ENCODE measurements at regions of chr2 and their contacts with region 1.

Region 1: DNA sequence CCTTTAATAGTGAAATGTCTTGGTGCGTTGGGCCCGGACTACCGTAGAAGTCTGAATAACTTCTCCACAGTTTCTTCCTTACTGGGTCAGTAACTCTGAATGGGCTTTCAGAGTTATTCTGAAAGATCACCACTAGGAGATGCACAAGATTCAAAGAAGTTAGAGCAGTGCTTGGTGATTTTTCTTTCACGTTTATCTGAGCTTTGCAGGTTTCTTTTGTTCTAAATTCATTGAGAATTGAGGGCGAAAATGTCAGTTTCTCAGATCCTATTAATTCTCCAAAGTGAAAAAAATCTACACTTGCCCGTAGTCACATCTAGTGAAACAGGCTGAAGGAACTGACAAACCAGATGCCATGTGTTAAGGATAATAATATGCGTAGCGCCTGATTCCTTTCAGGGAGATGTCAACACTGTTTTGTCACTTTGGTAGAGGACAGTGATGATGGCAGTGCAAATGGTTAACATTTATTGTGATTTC is 70.1 kb downstream of the QPCT start:
- DNase-seq: peak in 2 of 9 experiments; percentile 60 to 69
- ATAC-seq: peak; percentile 57
- H3K4me3 ChIP-seq: no peak overlapping the region
- H3K4me3 Mint-ChIP-seq: no peak overlapping the region
- H3K27ac ChIP-seq: no peak overlapping the region
- H3K27ac Mint-ChIP-seq: no peak overlapping the region
- H3K4me1 ChIP-seq: no peaks in the 10 kb centered on the region
- H3K4me1 Mint-ChIP-seq: peaks cover 15% of the 10 kb centered on the region
- H3K27me3 ChIP-seq: no peaks in the 10 kb centered on the region
- H3K27me3 Mint-ChIP-seq: peaks cover 3% of the 10 kb centered on the region
- CTCF ChIP-seq: peak; percentile 94

Region 2: DNA sequence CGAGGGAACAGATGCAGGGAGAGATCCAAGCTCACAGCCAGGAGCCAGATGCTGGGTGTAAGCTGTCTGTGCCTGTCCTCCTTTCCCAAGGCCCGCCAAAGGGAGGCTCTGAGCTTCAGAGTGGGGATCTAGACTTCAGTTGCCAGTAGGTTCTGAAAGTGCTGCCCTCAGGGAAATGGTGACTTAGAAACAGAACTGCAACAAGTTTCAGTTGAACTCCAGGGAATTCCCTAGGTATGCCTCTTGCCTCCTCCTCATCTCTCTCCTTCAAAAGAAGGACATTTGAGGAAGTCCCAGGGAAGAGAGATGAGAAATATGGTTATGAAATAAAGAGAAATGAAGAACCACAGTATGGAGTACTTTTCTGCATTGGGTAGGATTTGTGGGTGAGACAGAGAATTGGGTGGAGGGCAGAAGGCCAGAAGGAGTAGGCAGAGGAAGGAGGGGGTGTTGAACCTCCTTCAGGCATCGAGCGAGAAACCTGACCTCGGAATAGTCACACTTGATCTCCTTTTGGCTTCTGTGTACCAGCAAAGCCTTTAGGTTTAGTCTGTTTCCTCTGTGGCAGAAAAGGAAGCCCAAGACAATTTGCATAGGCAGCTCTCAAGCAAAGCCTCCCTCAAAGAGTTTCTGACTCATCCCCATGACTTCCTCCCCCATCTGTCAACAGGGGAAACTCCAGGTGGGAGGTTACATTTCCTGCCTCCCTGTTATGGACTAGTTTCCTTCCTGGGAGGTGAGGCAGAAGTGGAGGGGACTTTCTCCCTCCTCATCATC is 24.3 kb before region 1 on chr2:
- CTCF ChIA-PET with region 1: interaction called, 79 read pairs
- POLR2A ChIA-PET with region 1: interaction called, 3 read pairs
- intact Hi-C with region 1: no loop called
- DNase-seq: peak in 8 of 9 experiments; percentile 28 to 89 (median 64)
- ATAC-seq: peak; percentile 93
- H3K4me3 ChIP-seq: no peak overlapping the region
- H3K4me3 Mint-ChIP-seq: peak overlapping the region; percentile 0
- H3K27ac ChIP-seq: peak overlapping the region in 1 of 2 experiments; percentile 67
- H3K27ac Mint-ChIP-seq: peak overlapping the region; percentile 80
- H3K4me1 ChIP-seq: peaks cover 23% of the 10 kb centered on the region
- H3K4me1 Mint-ChIP-seq: peaks cover 3% of the 10 kb centered on the region
- H3K27me3 ChIP-seq: no peaks in the 10 kb centered on the region
- H3K27me3 Mint-ChIP-seq: no peaks in the 10 kb centered on the region
- CTCF ChIP-seq: no peak

Region 3: GRCh38 chr2:37537316-37537715 is 122.8 kb after region 1 on chr2:
- CTCF ChIA-PET with region 1: interaction called, 17 read pairs
- POLR2A ChIA-PET with region 1: interaction called, 5 read pairs
- intact Hi-C with region 1: loop called (anchors 1 to 10 kb)
- DNase-seq: no peak
- ATAC-seq: no peak
- H3K4me3 ChIP-seq: no peak overlapping the region
- H3K4me3 Mint-ChIP-seq: no peak overlapping the region
- H3K27ac ChIP-seq: no peak overlapping the region
- H3K27ac Mint-ChIP-seq: no peak overlapping the region
- H3K4me1 ChIP-seq: no peaks in the 10 kb centered on the region
- H3K4me1 Mint-ChIP-seq: peaks cover 3% of the 10 kb centered on the region
- H3K27me3 ChIP-seq: no peaks in the 10 kb centered on the region
- H3K27me3 Mint-ChIP-seq: no peaks in the 10 kb centered on the region
- CTCF ChIP-seq: no peak

Region 4: DNA sequence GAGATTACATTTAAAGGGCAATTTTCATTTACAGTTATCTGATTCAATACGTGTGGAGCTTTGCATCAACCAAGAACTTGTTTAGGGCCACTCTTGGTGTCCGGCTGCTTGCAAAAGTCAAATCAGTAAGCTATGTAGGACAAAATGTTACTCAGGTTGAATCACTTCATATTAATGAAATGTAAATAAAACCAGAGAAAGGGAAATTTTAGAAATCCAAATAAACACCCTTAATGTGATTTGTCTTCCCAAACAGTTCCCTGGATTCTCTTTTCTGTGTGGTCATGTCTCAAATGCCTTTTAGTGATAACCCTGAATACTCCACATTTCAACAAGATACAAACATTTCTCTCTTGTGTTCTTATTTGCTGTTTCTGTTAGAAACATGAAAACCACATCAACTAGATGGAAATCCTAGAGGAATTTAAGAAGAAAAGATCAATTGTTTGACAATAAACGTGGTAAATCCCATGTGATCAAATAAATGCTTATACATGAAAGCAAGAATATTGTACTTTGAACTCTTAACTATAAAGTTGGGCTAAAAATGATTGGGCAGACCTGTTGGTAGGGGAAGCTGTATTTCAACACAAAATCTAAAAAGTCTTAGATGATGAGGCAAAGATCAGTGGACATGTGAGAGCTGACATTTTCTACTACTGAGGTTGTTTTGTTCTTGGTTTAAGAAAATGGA is 155.6 kb after region 1 on chr2:
- CTCF ChIA-PET with region 1: interaction called, 10 read pairs
- POLR2A ChIA-PET with region 1: no interaction called
- intact Hi-C with region 1: no loop called
- DNase-seq: no peak
- ATAC-seq: no peak
- H3K4me3 ChIP-seq: no peak overlapping the region
- H3K4me3 Mint-ChIP-seq: no peak overlapping the region
- H3K27ac ChIP-seq: no peak overlapping the region
- H3K27ac Mint-ChIP-seq: no peak overlapping the region
- H3K4me1 ChIP-seq: peaks cover 8% of the 10 kb centered on the region
- H3K4me1 Mint-ChIP-seq: peaks cover 17% of the 10 kb centered on the region
- H3K27me3 ChIP-seq: no peaks in the 10 kb centered on the region
- H3K27me3 Mint-ChIP-seq: no peaks in the 10 kb centered on the region
- CTCF ChIP-seq: no peak

Region 5: GRCh38 chr2:37615804-37616676 is 201.5 kb after region 1 on chr2:
- CTCF ChIA-PET with region 1: interaction called, 11 read pairs
- POLR2A ChIA-PET with region 1: no interaction called
- intact Hi-C with region 1: no loop called
- DNase-seq: peak; percentile 49 to 85 (median 73)
- ATAC-seq: peak; percentile 94
- H3K4me3 ChIP-seq: no peak overlapping the region
- H3K4me3 Mint-ChIP-seq: peak overlapping the region; percentile 44
- H3K27ac ChIP-seq: peak overlapping the region; percentile 46 to 77
- H3K27ac Mint-ChIP-seq: peak overlapping the region; percentile 93
- H3K4me1 ChIP-seq: peaks cover 38% of the 10 kb centered on the region
- H3K4me1 Mint-ChIP-seq: peaks cover 62% of the 10 kb centered on the region
- H3K27me3 ChIP-seq: no peaks in the 10 kb centered on the region
- H3K27me3 Mint-ChIP-seq: no peaks in the 10 kb centered on the region
- CTCF ChIP-seq: no peak

Region 6: DNA sequence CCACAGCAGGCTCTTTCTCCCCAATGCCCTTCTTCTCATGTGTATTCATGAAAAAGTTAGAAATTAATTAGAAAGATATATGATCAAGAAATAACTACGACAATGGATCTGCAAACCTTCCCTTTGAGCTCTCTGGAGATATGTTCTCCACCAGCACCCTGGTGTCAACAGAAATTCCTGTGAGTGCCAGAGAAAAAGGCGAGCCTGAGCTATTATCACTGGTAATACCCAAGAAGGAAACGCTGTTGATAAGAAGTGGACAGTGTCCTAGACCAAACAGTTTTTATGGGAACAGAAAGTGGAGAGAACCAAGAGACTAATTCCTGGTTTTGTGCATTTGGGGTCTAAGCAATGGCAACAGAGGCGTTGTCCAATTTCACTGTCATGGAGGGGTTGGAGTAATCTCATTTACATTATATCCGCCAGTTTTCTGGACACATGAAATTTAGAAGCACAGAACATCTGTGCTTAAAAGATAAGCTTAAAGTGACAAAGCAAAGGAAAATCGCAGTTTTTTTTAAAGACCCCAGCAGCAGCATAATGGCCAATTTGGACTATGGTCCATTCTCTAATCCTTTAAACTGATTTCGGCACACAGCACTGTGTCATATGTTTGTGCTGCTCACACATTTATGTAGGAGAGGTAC is 304.1 kb after region 1 on chr2:
- CTCF ChIA-PET with region 1: no interaction called
- POLR2A ChIA-PET with region 1: no interaction called
- intact Hi-C with region 1: loop called in 1 of 2 experiments (anchors 5 kb)
- DNase-seq: no peak
- ATAC-seq: no peak
- H3K4me3 ChIP-seq: no peak overlapping the region
- H3K4me3 Mint-ChIP-seq: no peak overlapping the region
- H3K27ac ChIP-seq: no peak overlapping the region
- H3K27ac Mint-ChIP-seq: no peak overlapping the region
- H3K4me1 ChIP-seq: peaks cover 2% of the 10 kb centered on the region
- H3K4me1 Mint-ChIP-seq: peaks cover 6% of the 10 kb centered on the region
- H3K27me3 ChIP-seq: no peaks in the 10 kb centered on the region
- H3K27me3 Mint-ChIP-seq: no peaks in the 10 kb centered on the region
- CTCF ChIP-seq: no peak

Region 7: GRCh38 chr2:37871456-37872191 is 457.1 kb after region 1 on chr2:
- CTCF ChIA-PET with region 1: interaction called, 43 read pairs
- POLR2A ChIA-PET with region 1: no interaction called
- intact Hi-C with region 1: no loop called
- DNase-seq: no peak
- ATAC-seq: no peak
- H3K4me3 ChIP-seq: no peak overlapping the region
- H3K4me3 Mint-ChIP-seq: no peak overlapping the region
- H3K27ac ChIP-seq: no peak overlapping the region
- H3K27ac Mint-ChIP-seq: no peak overlapping the region
- H3K4me1 ChIP-seq: no peaks in the 10 kb centered on the region
- H3K4me1 Mint-ChIP-seq: no peaks in the 10 kb centered on the region
- H3K27me3 ChIP-seq: no peaks in the 10 kb centered on the region
- H3K27me3 Mint-ChIP-seq: peaks cover 4% of the 10 kb centered on the region
- CTCF ChIP-seq: no peak

Measured in CD8-positive, alpha-beta T cell (primary cell).